ENCODE measurements at regions of chr18 and their contacts with region 1.

Region 1: GRCh38 chr18:59823596-59824195 is 76.1 kb upstream of the PMAIP1 start:
- DNase-seq: peak; percentile 85
- H3K4me3 ChIP-seq: no peak overlapping the region
- H3K27ac ChIP-seq: no peak overlapping the region
- H3K4me1 ChIP-seq: peaks cover 32% of the 10 kb centered on the region
- H3K27me3 ChIP-seq: no peaks in the 10 kb centered on the region

Region 2: DNA sequence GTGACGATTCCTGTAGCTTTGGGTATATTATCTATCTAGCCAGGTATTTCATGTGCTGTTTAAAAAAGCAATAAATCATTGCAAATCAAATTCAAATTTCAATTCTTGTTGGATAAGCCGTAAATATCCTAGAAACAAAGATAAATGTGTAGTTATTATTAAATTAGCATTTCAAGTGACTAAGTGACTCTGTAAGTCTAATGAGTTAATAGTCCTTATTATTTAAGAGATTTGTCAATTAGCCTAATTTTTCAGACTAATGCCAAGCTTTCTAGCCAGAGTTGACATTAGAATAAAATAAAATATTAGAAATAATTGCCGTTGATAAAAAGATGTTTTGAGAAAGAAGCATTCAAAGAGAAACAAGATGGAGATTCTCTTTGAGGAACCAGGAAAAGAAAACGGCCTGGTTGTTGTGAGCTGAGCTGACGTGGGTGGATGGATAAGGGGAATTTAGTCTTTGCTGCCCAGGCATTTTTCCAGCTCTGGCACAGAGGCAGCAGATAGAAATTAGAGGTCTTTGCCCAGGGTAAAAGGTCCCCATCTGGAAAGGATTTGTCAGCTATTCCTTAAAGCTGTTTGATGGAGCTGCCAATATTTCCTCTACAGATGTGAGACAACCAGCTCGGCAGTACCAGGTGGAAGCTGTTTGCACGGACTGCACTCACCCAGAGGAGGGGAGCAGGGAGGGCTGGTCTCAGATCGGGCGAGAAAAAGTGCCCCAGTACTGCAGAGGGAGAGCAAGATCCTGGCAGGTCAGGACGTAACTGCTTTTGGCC is 801.3 kb before region 1 on chr18:
- in situ Hi-C with region 1: no loop called
- DNase-seq: peak; percentile 62
- H3K4me3 ChIP-seq: peak overlapping the region; percentile 2; the same call in 1 of the 2 replicates
- H3K27ac ChIP-seq: no peak overlapping the region
- H3K4me1 ChIP-seq: peaks cover 13% of the 10 kb centered on the region
- H3K27me3 ChIP-seq: no peaks in the 10 kb centered on the region

Region 3: DNA sequence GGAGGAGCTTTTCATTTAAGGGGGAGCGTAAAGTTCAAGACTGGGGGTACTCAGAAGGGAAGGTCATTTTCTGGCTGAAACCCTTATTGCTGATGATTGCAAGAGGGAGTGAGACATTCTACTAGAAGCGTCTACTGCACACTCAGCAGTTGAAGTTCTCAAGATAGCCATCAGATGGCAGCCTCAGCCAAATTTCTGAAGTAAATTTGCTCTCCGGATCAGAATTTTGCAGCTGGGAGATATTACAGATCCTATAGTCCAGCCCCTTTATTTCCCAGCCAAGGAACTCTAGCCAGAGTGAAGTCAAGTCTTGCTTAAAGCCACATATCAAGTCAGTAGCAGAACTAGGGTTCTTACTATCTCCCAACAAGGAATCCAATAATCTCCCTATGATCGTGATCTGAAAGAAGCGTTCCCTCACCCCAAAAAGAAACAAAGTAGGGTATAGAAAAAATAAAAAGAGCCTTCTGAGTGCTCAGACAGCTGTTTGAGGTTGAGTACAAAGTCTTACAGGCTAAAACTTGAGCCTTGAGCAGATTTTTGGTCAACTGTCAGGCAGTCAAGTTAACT is 574.4 kb before region 1 on chr18:
- in situ Hi-C with region 1: loop called (anchors 25 kb)
- DNase-seq: peak; percentile 90
- H3K4me3 ChIP-seq: no peak overlapping the region
- H3K27ac ChIP-seq: no peak overlapping the region
- H3K4me1 ChIP-seq: peaks cover 3% of the 10 kb centered on the region; the same call in 1 of the 2 replicates
- H3K27me3 ChIP-seq: peaks cover 55% of the 10 kb centered on the region

Region 4: DNA sequence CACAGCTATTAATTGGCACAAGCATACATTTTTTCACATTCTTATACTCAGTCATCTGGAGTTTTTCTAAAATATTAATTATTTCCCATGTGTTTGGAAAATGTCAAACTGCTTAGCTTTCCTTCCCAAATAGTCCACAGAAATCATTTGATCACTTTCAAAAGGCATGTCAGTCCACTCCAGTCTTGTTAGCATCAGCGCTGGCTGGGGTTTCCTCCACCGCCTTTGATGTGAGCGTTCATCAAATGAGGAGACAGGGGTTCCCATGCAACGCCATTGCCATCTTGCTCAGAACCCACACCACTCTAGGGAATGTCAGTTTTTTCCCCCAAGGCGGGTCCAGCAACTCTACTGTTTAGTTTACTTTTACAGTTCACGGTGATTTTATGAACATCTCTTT is 537.4 kb before region 1 on chr18:
- in situ Hi-C with region 1: no loop called
- DNase-seq: no peak
- H3K4me3 ChIP-seq: no peak overlapping the region
- H3K27ac ChIP-seq: no peak overlapping the region
- H3K4me1 ChIP-seq: no peaks in the 10 kb centered on the region
- H3K27me3 ChIP-seq: peaks cover 27% of the 10 kb centered on the region

Region 5: DNA sequence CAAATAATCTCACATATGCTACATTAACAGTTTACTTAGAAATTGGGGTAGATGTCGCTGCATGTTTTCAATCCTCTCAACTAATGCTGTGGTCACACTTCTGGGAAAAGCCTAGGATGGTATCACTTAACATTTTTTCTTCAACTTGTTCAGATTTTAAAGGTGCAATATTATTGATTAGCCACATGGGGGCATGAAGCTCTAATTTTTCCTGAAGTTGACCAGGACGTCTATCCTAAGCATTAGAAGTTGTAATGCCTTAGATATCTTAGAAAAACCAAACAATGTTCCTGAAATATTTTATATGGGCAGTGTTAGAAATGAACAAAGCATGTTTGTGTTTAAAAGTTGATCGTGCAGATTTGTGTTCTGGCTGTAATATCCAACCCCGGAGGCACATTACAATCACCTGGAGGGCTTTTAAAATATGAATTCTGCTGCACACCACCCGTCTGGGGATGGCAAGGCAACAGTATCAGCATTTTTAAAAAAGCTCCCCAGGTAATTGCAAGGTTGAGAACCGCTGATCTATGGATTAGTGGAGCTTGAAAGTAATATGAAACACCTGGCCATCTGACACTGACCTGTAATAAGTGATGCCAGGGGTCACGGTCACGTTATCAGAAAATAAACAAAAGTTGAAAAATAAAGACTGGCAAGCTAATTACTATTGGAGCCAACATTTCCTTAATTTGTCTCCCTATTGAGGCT is 364.2 kb before region 1 on chr18:
- in situ Hi-C with region 1: loop called (anchors 10 kb)
- DNase-seq: peak; percentile 68
- H3K4me3 ChIP-seq: no peak overlapping the region
- H3K27ac ChIP-seq: no peak overlapping the region
- H3K4me1 ChIP-seq: peaks cover 7% of the 10 kb centered on the region; the same call in 1 of the 2 replicates
- H3K27me3 ChIP-seq: no peaks in the 10 kb centered on the region

Region 6: GRCh38 chr18:59631583-59632181 is 192.0 kb before region 1 on chr18:
- in situ Hi-C with region 1: loop called (anchors 10 kb)
- DNase-seq: peak; percentile 52
- H3K4me3 ChIP-seq: no peak overlapping the region
- H3K27ac ChIP-seq: no peak overlapping the region
- H3K4me1 ChIP-seq: peaks cover 22% of the 10 kb centered on the region
- H3K27me3 ChIP-seq: no peaks in the 10 kb centered on the region

Region 7: GRCh38 chr18:59881728-59882656 is 58.3 kb after region 1 on chr18:
- in situ Hi-C with region 1: no loop called
- DNase-seq: peak; percentile 60
- H3K4me3 ChIP-seq: peak overlapping the region; percentile 18; the same call in 1 of the 2 replicates
- H3K27ac ChIP-seq: peak overlapping the region; percentile 64
- H3K4me1 ChIP-seq: peaks cover 27% of the 10 kb centered on the region
- H3K27me3 ChIP-seq: no peaks in the 10 kb centered on the region

Region 8: GRCh38 chr18:60391571-60392226 is 568.0 kb after region 1 on chr18:
- in situ Hi-C with region 1: no loop called
- DNase-seq: peak; percentile 74
- H3K4me3 ChIP-seq: no peak overlapping the region
- H3K27ac ChIP-seq: no peak overlapping the region
- H3K4me1 ChIP-seq: peaks cover 26% of the 10 kb centered on the region
- H3K27me3 ChIP-seq: no peaks in the 10 kb centered on the region

Measured in GM23248 (cell line).